Gastrocnemius medialis (tissue), 4 donors: ENCODE measurements at regions of chr20 and their contacts with region 1.

Region 1: GRCh38 chr20:46349035-46349741 is 40.9 kb upstream of the CDH22 start:
- DNase-seq: no peak
- ATAC-seq: peak; percentile 51 to 64
- H3K4me3 ChIP-seq: no peak overlapping the region
- H3K27ac ChIP-seq: peak overlapping the region in 1 of 4 donors; percentile 38
- H3K4me1 ChIP-seq: no peaks in the 10 kb centered on the region
- H3K27me3 ChIP-seq: no peaks in the 10 kb centered on the region
- CTCF ChIP-seq: peak; percentile 84 to 92 (median 90)
- POLR2A ChIP-seq: no peak

Region 2: GRCh38 chr20:46132705-46133120 is 216.5 kb before region 1 on chr20:
- in situ Hi-C with region 1: loop called in 3 of 4 experiments (anchors 10 to 25 kb)
- intact Hi-C with region 1: loop called (anchors 2 kb)
- DNase-seq: peak; percentile 46 to 50
- ATAC-seq: peak; percentile 56 to 82
- H3K4me3 ChIP-seq: no peak overlapping the region
- H3K27ac ChIP-seq: no peak overlapping the region
- H3K4me1 ChIP-seq: peaks cover 5 to 7% of the 10 kb centered on the region in 2 donors
- H3K27me3 ChIP-seq: no peaks in the 10 kb centered on the region
- CTCF ChIP-seq: peak; percentile 79 to 87 (median 84)
- POLR2A ChIP-seq: no peak

Region 3: DNA sequence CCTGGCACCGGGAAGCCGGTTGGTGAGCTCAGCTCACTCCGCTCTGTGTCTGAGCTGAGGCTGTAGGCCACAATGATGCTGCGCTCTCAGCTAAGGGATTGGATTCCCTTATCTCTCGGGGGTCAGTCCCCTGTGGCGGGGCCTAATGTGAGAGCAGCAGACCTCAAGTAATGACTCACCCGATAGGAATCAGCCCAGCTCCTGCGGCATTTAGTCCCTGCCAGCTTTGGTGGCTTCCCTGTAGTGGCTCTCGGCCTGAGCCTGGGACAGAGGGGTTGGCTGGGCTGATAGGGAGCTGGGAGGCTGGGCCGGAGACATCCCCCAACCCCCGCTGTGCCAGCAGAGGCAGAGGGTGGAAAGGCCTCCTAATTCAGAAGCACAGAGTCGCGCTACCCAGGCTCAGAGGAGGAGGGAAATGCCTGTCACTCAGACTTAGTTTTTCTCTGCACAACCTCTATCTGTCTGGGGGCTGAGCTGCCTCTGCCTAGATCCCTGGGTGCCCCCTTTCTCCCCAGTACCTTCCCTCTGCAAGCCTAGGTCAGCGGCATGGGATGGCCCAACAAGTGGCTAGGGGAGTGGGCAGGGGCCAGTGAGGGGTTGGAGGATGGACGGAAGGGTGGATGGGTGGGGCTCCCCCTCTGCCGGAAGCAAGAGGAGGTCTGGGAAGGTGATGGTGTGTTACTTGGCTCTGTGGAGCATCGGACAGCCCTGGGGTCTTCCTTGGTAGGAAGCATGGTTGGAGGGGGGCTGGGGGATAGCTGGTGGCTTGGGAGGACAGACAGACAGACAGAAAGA is 133.1 kb before region 1 on chr20:
- in situ Hi-C with region 1: no loop called
- intact Hi-C with region 1: loop called (anchors 10 kb)
- DNase-seq: peak; percentile 29 to 73
- ATAC-seq: peak; percentile 41 to 59
- H3K4me3 ChIP-seq: no peak overlapping the region
- H3K27ac ChIP-seq: peak overlapping the region; percentile 19 to 86 (median 66)
- H3K4me1 ChIP-seq: peaks cover 19 to 36% of the 10 kb centered on the region in 2 donors
- H3K27me3 ChIP-seq: peaks cover 0 to under 1% (median 0%) of the 10 kb centered on the region in 3 donors
- CTCF ChIP-seq: no peak
- POLR2A ChIP-seq: no peak

Region 4: DNA sequence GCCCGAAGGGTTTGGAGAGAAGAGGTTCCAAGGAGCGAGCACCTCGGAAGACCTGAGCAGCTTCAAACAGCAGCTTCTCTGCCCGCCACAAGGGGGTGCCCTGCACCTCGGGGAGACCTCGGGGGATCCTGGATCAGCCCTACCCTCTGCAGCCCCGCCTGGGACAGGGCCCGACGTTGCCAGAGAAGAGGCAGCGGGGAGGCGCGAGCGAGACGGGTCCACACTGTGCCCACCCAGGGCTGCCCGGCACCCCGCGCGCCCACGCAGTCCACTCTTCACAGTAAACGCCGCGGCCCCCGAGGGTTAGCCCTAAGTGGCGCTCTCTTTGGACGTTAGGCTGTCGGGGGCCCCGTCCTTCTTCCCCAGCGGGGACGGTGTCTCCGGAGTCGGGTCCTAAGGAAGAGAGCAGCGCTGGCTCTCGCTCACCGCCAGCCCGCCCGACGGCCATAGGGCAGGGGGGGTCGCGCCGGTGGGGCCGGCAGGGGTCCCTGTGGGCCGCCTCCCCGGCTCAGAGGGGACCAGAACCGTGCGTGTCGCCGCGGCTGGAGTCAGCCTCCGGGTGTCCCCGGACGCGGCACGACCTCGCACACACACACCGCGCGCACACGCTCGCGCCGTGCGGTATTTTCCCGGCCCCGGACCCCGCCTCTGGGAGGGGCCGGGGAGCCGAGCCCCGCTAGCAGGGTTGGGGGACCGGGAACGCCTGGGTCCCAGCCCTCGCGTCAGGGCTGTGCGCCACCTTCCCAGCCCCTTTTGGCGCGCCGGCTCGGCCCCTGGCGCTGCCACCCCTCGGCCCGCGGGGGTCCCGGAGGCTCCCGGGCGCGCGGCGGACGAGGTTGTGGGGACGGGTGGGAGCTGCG is 41.8 kb before region 1 on chr20:
- in situ Hi-C with region 1: no loop called
- intact Hi-C with region 1: loop called (anchors 1 kb)
- DNase-seq: peak; percentile 17 to 29
- ATAC-seq: peak; percentile 61 to 66
- H3K4me3 ChIP-seq: peak overlapping the region; percentile 39 to 57 (median 45)
- H3K27ac ChIP-seq: no peak overlapping the region
- H3K4me1 ChIP-seq: peaks cover 3 to 6% of the 10 kb centered on the region in 2 donors
- H3K27me3 ChIP-seq: peaks cover 55 to 66% (median 56%) of the 10 kb centered on the region in 3 donors
- CTCF ChIP-seq: peak; percentile 71 to 90 (median 77)
- POLR2A ChIP-seq: no peak